Head of caudate nucleus (tissue), 42 donors: ENCODE measurements at regions of chr14 and their contacts with region 1.

Region 1: GRCh38 chr14:63543000-63543825 is at the start of gene PPP2R5E:
- DNase-seq: peak; percentile 97 to 100 (median 99)

Region 2: DNA sequence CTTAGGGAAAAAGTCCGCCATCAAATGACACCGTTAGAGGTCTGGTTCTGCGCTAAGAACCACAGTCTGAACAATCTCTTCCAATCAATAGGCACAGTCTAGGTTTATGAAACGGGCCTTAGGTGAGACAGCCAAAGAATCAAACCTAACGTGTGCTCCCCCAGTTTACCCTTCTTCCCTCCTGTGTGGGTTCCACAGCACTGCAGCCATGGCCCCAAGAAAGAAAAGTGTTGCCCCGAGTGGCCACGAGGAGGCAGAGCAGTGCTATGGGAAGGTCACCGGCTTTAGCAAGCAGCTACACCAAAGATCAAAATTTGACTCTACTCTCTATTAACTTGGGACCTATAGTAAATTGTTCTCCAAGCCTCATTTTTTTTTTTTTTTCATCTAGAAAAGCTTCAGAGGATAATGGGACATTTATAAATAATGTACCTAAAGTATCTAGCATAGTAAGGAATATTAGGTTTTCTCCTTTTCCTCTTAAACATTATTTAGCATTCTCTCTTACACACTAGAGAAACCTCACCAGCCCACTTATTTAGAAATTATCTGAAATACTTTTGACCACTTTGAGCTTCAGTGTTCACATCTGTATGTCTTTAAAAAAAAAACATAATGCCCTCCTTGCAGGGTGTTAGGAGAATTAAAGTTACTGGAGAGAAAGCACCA is 154.3 kb before region 1 on chr14:
- intact Hi-C with region 1: loop called (anchors 5 kb)
- DNase-seq: peak in 41 of 42 donors; percentile 12 to 83 (median 61)

Region 3: DNA sequence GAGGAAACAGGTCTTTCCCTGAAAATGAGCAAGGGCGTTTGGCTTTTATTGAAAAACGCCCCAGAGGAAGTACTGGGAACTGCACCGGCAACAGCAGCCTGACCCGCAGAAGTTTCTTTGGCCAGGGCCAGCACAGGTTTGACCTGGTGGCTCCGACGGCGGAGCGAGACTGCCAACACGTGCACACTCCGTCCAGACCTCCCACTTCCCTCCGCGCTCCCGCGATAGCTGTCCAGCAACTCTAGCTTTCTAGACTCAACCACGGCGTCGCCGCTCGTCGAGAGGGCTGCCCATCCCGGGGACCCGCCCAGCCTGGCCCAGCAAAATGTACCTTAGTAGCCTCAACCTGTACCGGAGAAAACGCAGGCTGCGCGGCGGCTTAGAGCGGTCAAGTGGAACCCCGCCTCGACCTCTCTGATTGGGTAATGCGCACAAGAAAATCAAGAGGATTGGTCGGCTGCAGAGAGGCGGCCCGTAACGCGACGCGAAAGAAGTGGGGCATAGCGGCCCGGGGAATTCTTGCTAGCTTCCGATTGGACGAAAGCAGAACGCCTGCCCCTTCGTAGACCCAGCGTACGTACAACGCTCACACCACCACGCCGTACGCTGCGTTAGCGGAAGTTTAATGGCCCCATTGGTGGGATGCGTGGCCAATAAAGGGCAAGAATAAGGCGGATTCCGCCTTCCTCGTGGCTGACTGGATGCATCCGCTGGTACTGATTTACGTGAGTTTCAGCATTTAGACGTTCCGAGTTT is 98.4 kb after region 1 on chr14 and contains the start of gene WDR89:
- intact Hi-C with region 1: loop called (anchors 10 kb)
- DNase-seq: peak; percentile 93 to 99 (median 98)

Region 4: DNA sequence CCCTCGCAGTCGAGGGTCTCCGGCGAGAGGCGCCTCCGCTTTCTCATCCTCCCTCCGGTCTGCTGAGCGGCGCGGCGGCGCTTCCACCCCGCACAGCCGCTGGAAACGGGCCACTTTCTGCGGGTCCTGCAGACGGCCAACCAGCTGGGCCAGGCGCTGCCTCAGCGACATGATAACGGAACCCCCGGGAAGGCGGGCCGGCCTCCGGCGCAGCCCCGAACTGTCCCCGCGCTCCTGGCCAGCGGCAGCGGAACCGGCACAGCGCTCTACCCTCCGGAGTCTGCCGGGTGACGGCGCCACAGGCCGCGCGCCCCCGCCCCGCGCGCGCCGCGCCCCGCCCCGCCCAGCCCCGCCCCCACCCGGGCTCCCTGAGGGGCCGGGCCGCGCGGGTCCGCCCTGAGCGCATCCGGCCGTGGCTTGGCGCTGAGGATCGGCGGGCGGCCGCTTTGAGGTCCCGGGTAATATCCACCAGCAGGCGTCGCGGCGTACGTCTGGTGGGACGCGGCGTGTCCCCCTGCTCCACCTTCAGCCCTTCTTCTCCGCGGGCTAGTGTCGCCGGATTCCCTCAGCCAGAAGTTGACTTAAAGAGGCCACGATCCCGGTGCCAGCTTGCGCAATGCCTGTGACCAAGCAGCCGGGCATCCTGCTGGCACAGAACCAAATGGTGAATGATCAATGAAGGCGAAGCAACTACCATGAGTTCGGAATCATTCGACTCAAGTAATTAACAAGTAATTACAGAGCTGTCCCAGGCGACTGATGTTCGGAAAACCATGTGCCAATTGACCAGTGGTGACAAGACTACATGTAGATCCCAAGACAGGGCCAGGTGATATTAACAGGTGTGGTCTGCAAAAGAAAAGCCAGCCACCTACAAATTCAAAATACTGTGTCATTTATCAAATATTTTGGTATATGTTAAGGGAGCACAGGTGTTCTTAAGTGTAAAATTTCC is 184.8 kb after region 1 on chr14 and contains the start of gene SGPP1:
- intact Hi-C with region 1: loop called (anchors 5 kb)
- DNase-seq: peak; percentile 31 to 88 (median 73)

Region 5: GRCh38 chr14:64005822-64006221 is 462.6 kb after region 1 on chr14:
- intact Hi-C with region 1: no loop called
- DNase-seq: no peak